IMR-90 (cell line): ENCODE measurements at regions of chr2 and their contacts with region 1.

Region 1: DNA sequence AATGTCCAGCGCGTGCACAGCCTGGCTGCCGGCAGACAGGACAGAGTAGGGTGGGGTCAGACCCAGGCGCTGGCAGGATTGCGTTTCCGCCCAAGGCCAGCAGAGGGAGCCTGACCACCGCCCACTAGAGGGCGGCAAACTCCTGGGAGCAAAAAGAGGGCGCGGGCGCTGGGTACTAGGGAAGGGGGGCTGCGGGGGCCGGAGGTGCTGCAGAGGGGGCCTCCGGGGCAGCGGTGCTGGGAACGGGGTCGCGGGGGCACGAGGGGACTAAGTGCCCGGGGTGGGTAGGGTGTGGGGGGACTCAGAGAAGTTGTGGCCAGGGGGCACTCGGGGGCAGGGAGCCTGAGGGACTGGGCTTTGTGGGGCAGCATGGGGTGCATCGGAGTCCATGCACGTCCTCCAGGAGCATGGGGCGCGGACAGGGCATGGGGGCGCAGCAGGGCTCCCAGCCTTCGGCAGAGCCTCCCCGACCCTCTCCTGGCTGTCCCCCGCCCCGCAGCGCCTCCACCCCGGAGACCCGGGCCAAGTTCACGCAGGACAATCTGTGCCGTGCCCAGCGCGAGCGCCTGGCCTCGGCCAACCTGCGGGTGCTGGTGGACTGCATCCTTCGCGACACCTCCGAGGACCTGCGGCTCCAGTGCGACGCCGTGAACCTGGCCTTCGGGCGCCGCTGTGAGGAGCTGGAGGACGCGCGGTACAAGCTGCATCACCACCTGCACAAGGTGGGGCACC is 3.2 kb downstream of the TEKT4 start:
- DNase-seq: peak; percentile 6
- ATAC-seq: peak; percentile 88
- H3K4me3 ChIP-seq: no peak overlapping the region
- H3K27ac ChIP-seq: no peak overlapping the region
- H3K4me1 ChIP-seq: no peaks in the 10 kb centered on the region
- H3K27me3 ChIP-seq: peaks cover 2% of the 10 kb centered on the region; the same call in 1 of the 2 replicates
- CTCF ChIP-seq: peak; percentile 98
- POLR2A ChIP-seq: no peak
- RAD21 ChIP-seq: peak; percentile 46

Region 2: GRCh38 chr2:94622113-94622618 is 252.3 kb before region 1 on chr2:
- CTCF ChIA-PET with region 1: no interaction called
- POLR2A ChIA-PET with region 1: no interaction called
- dilution Hi-C with region 1: no loop called
- in situ Hi-C with region 1: no loop called
- intact Hi-C with region 1: no loop called
- DNase-seq: no peak
- ATAC-seq: no peak
- H3K4me3 ChIP-seq: no peak overlapping the region
- H3K27ac ChIP-seq: no peak overlapping the region
- H3K4me1 ChIP-seq: no peaks in the 10 kb centered on the region
- H3K27me3 ChIP-seq: no peaks in the 10 kb centered on the region
- CTCF ChIP-seq: no peak
- POLR2A ChIP-seq: no peak
- RAD21 ChIP-seq: no peak

Region 3: GRCh38 chr2:94956797-94957391 is 82.5 kb after region 1 on chr2:
- CTCF ChIA-PET with region 1: no interaction called
- POLR2A ChIA-PET with region 1: no interaction called
- dilution Hi-C with region 1: no loop called
- in situ Hi-C with region 1: no loop called
- intact Hi-C with region 1: loop called (anchors 2 kb)
- DNase-seq: peak; percentile 15
- ATAC-seq: peak; percentile 93
- H3K4me3 ChIP-seq: no peak overlapping the region
- H3K27ac ChIP-seq: no peak overlapping the region
- H3K4me1 ChIP-seq: no peaks in the 10 kb centered on the region
- H3K27me3 ChIP-seq: peaks cover 4% of the 10 kb centered on the region; the same call in 1 of the 2 replicates
- CTCF ChIP-seq: peak; percentile 76
- POLR2A ChIP-seq: no peak
- RAD21 ChIP-seq: peak; percentile 49

Region 4: DNA sequence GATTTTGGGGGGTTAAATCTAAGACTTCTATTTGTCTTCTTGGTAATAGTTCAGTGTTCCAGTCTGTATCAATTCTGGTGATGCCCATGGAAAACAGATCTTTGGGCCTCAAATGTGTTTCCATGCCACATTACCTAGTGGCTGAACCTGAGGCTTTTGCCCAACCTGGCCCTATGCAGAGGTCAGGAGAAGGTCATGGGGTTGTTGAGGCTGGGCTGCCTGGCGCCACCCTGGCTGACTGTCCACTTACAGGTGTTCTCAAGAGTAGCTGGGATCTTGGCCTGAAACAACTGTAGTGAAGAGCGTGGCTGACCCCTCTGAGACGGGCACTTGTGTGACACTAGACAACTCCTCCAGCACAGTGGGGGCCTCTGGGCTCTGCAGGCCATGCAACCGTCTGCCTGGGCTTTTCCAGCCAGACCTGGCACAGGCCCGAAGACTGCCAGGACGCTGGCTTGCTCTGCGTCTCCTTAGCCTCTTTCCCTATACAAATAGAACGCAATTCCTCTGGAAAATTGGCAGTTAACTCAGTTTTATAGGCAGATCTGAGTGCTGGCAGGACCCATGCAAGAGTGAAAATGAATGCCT is 845.1 kb after region 1 on chr2:
- CTCF ChIA-PET with region 1: no interaction called
- POLR2A ChIA-PET with region 1: no interaction called
- dilution Hi-C with region 1: no loop called
- in situ Hi-C with region 1: no loop called
- intact Hi-C with region 1: no loop called
- DNase-seq: no peak
- ATAC-seq: no peak
- H3K4me3 ChIP-seq: no peak overlapping the region
- H3K27ac ChIP-seq: no peak overlapping the region
- H3K4me1 ChIP-seq: no peaks in the 10 kb centered on the region
- H3K27me3 ChIP-seq: peaks cover 13% of the 10 kb centered on the region
- CTCF ChIP-seq: no peak
- POLR2A ChIP-seq: no peak
- RAD21 ChIP-seq: no peak